Tibial artery (tissue), 4 donors: ENCODE measurements at regions of chr3 and their contacts with region 1.

Region 1: DNA sequence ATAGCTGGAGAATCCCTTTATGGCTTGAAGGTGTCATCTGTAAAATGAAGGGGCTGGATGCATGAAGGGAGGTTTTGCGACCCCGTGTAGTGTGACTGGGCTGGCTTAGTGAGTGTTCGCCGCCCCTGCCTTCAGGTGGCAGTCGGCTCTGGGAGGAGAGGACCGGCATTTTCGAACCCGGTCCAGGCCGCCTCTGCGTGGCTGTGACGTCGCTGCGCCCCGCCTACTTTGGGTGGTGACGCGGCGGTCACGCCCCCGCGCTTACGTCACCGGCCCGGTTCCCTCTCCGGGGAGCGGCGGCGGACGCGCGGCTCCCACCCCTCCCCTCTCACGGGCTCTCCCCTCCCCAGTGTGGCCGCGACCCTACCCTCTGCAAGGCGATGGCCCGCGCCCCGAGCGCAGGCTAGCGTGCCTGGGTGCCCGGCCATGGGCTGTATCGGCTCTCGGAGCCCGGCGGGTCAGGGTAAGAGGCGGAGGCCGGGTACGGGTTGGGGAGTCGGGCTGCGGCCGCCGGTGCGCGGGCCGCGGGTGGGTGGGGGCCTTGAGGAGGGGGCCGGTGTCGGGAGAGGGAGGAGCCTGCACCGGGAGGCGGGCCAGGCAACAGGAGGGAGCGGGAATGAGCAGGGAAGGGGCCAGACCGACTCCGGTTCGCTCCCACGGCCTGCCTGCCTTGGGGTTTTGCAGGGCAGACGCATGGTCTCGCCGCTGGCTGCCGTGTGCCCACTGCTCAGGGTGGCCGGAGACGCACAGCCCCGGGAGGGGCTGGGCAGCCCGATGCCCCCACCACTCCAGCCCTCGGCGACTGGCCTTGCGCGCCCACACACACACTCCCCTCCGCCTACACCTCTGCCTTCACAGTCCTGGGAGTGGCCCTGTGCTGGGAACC is 1.5 kb upstream of the FAM131A start:
- DNase-seq: peak; percentile 79 to 92
- H3K4me3 ChIP-seq: peak overlapping the region; percentile 90 to 94
- H3K27ac ChIP-seq: peak overlapping the region; percentile 97 to 98
- H3K4me1 ChIP-seq: peaks cover 0 to 39% (median 27%) of the 10 kb centered on the region in 4 donors
- H3K27me3 ChIP-seq: no peaks in the 10 kb centered on the region
- CTCF ChIP-seq: no peak

Region 2: DNA sequence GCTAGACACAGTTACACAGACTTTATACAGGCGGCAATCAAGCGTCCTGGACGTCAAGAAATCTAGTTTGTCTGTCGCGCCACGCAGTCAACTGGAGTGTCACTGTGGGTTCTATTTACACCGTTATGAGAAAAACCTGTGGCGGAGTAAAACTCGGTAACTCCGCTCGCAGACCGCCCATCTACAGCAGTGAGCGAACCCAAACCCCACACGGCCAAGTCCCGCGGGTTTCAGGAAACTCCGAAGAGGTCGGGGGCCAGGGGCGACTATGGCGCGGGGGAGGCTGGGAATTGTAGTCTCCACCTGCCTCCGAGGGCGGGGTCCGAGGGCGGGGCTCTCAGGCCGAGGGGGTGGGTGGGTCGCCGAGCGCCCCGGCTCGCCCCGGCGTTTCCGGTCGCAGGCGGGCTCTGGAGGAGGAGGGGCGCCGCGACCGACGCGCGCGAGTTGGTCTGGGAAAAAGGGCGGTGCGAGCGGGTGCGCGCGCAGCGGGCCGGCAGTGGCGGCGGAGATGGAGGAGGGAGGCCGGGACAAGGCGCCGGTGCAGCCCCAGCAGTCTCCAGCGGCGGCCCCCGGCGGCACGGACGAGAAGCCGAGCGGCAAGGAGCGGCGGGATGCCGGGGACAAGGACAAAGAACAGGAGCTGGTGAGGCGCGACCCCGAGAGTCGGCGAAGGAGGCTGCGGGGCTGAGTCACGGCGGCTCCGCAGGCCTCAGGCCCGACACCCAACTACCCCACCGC is 37.0 kb before region 1 on chr3 and contains the start of gene PSMD2:
- intact Hi-C with region 1: loop called (anchors 2 kb)
- DNase-seq: peak; percentile 96 to 99
- H3K4me3 ChIP-seq: peak within 1 kb of the TSS; percentile 73 to 75
- H3K27ac ChIP-seq: peak within 1 kb of the TSS; percentile 68 to 85
- H3K4me1 ChIP-seq: peaks cover 0 to 25% (median 18%) of the 10 kb centered on the region in 4 donors
- H3K27me3 ChIP-seq: no peaks in the 10 kb centered on the region
- CTCF ChIP-seq: peak in 1 of 2 experiments; percentile 7

Region 3: DNA sequence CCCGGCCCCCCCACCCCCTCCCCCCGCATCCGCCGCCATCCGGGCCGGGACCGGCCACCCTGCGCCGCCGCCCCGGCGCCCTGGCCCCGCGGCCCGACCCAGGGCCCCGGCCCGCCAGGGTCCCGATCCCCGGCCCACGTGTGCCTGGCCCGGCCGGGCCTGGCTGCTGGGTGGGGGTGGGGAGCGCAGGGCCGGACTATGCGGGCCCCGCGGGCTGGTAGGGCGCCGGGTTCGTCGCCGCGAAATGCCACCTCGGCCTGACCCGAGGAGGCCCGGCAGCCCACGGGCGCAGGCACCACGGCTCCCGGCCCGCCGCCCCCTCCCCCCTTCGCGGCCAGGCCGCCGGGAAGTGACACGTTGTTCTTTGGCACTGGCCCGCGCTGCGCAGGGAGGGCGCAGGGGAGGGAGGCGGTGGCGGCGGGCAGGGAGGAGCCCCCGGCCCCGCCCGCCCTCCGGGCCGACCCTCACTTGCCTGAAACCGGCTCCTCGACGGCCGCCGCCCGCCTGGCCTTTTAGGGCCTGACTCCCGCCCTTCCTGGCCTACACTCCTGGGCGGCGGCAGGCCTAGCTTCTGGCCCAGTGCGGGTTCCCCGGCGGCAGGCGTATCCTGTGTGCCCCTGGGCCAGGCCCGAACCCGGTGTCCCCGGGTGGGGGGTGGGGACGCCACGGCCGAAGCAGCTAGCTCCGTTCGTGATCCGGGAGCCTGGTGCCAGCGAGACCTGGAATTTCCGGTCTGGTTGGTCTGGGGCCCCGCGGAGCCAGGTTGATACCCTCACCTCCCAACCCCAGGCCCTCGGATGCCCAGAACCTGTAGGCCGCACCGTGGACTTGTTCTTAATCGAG is 21.0 kb before region 1 on chr3:
- intact Hi-C with region 1: loop called (anchors 1 kb)
- DNase-seq: peak; percentile 88 to 94
- H3K4me3 ChIP-seq: peak overlapping the region; percentile 76 to 77
- H3K27ac ChIP-seq: peak overlapping the region; percentile 94 to 97
- H3K4me1 ChIP-seq: peaks cover 1 to 50% (median 43%) of the 10 kb centered on the region in 4 donors
- H3K27me3 ChIP-seq: no peaks in the 10 kb centered on the region
- CTCF ChIP-seq: no peak

Region 4: GRCh38 chr3:184362668-184363540 is 27.0 kb after region 1 on chr3:
- intact Hi-C with region 1: loop called (anchors 2 kb)
- DNase-seq: peak; percentile 93 to 98
- H3K4me3 ChIP-seq: peak overlapping the region; percentile 69 to 96
- H3K27ac ChIP-seq: peak overlapping the region; percentile 97 to 98
- H3K4me1 ChIP-seq: peaks cover 0 to 35% (median 19%) of the 10 kb centered on the region in 4 donors
- H3K27me3 ChIP-seq: no peaks in the 10 kb centered on the region
- CTCF ChIP-seq: peak; percentile 45 to 46